ENCODE measurements at regions of chr12 and their contacts with region 1.

Region 1: DNA sequence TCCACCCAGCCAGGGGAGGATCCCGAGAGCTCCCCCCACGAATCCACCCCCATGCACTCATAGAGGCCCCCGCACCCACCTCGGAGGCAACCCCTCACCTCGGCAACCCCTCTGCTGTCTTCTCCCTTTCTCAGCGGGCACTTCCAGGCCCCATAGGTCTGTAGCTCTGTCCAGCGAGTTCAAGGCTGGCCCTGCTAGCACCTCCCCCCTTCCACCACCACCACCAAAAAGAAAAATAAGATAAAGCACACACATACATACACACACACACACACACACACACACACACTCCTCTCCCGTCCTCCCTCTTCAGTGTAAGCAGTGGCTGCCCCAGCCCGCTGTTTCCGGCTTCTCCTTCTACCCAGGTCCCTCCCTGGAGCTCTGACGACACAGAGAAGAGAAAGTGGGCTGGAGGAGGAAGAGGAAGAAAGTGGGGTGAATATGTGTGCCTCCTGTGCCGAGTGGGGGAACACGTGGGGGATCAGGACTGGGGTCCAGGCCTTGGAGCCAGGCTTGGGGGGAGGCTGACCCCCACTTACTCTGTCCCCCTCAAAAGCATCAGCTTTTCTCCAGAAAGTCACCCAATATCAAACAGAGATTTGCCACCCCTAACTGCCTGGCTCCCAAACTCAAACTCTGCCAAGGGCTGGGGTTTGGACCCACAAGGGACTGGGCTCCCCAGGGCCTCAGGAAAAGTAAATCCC is at the start of gene STAT6:
- DNase-seq: peak; percentile 89
- H3K4me3 Mint-ChIP-seq: peak within 1 kb of the TSS; percentile 90
- H3K27ac Mint-ChIP-seq: peak within 1 kb of the TSS; percentile 95
- H3K4me1 Mint-ChIP-seq: peaks cover 49% of the 10 kb centered on the region
- H3K27me3 Mint-ChIP-seq: no peaks in the 10 kb centered on the region
- total RNA-seq, gene STAT6: 209 to 218 TPM

Region 2: DNA sequence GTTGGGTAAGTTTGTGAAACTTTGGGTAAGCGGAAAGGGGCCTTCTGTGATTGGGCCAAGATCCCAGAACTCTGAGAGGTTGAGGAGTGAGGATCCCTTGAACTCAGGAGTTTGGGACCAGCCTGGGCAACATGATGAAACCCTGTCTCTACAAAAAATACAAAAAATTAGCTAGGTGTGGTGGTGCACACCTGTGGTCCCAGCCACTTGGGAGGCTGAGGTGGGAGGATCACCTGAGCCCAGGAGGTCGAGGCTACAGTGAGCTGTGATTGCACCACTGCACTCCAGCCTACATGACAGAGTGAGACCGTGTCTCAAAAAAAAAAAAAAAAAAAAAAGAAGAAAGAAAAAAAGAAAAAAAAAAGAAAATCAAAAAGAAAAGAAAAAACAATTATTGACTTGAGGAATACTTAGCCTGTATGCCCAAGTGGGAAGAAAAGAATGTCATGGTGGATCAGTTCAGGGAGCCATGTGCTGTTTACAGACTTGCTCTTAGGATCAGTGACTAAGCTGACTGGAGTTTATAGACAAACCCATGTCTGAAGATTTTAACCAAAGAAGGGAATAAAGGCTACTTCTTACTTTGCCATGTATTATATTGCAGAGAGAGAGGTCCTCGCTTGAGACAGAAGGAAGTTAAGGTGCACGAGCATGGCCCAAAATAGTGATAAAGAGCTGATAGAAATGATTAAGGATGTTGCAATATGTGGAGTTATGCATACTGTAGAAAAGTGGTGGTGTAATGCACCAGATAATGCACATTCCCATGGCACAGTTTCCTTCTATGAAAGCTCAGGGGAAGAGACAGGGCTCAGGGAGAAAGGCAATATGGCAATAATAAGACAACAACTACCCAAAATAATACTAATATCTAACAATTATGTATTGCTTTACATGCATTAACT is 347.2 kb before region 1 on chr12:
- CTCF ChIA-PET with region 1: interaction called, 19 read pairs
- POLR2A ChIA-PET with region 1: no interaction called
- intact Hi-C with region 1: no loop called
- DNase-seq: no peak
- H3K4me3 Mint-ChIP-seq: no peak overlapping the region
- H3K27ac Mint-ChIP-seq: no peak overlapping the region
- H3K4me1 Mint-ChIP-seq: peaks cover under 1% of the 10 kb centered on the region
- H3K27me3 Mint-ChIP-seq: no peaks in the 10 kb centered on the region

Region 3: GRCh38 chr12:56998981-56999380 is 112.2 kb before region 1 on chr12:
- CTCF ChIA-PET with region 1: interaction called, 34 read pairs
- POLR2A ChIA-PET with region 1: interaction called, 11 read pairs
- intact Hi-C with region 1: loop called (anchors 2 kb)
- DNase-seq: peak; percentile 78
- H3K4me3 Mint-ChIP-seq: no peak overlapping the region
- H3K27ac Mint-ChIP-seq: peak overlapping the region; percentile 34
- H3K4me1 Mint-ChIP-seq: peaks cover 54% of the 10 kb centered on the region
- H3K27me3 Mint-ChIP-seq: no peaks in the 10 kb centered on the region

Region 4: DNA sequence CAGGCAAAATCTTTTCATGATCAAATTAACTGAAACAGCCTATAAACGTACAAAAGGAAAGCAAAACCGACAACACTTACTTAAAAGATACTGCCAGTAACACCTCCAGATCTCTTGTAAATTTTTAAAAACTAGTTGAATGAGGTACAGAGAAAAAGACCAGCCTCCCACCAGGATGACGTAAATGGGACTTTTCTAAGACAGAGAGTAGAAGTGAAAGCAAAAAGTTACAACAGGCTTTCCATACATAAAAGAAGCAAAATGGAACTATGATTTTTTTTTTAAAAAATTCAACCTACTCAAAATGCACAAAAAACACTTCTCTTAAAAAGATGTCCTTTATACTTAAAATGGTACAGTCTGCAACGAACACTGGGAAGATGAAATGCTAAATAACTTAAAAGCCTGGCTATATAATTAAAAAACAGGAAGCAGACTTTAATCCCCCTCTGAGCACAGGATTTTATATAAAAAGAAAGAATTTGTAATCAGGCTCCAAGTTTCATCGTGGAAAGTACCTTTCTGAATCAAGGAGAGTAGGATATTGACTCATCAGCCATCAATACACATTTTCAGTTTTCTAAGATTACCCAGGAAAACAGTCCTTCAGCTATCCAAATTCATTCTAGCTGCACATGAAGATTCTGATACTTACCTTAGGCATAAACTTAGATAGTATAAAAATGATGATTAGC is 47.0 kb before region 1 on chr12:
- CTCF ChIA-PET with region 1: interaction called, 261 read pairs
- POLR2A ChIA-PET with region 1: interaction called, 20 read pairs
- intact Hi-C with region 1: loop called (anchors 1 kb)
- DNase-seq: peak; percentile 58
- H3K4me3 Mint-ChIP-seq: peak overlapping the region; percentile 67
- H3K27ac Mint-ChIP-seq: peak overlapping the region; percentile 98
- H3K4me1 Mint-ChIP-seq: peaks cover 53% of the 10 kb centered on the region
- H3K27me3 Mint-ChIP-seq: no peaks in the 10 kb centered on the region

Region 5: DNA sequence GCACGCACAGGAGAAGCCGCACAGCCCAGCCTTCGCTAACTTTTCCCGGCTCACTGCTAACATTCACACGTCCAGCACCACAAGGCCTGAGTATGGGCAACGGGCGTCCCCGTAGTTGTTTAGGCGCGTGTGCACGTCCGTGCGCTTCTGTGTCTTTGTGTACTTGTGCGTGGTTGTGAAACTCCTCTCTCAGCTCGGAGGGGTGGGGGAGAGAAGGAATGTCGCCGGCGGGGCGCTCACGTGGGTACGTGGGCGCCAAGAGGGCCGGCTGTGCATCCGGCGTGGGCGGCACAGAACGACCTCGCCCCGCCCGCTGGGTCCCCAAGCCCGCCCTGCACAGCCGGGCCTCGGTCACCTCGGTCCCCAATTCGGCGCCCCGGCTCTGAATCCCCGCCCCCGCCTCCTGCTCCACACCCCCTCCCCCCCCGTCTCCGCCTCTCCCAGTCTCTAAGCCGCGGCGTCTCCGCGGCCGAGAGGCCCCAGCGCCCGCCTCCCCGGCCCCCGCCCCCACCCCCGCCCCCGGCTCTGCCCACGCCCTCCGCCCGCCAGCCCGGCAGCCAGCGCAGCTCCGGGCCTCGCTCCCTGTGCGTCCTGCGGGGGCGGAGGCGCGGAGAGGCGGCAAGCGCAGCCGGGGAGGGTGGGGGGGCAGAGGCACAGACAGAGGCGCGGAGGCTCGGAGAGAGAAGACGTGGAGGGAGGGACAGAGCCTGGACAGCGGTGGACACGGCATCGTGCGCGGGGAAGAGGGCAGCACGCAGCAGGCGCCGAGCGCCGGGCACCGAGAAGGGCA is 22.5 kb before region 1 on chr12 and contains the start of gene NAB2:
- CTCF ChIA-PET with region 1: interaction called, 62 read pairs
- POLR2A ChIA-PET with region 1: interaction called, 83 read pairs
- intact Hi-C with region 1: loop called (anchors 1 kb)
- DNase-seq: peak; percentile 92
- H3K4me3 Mint-ChIP-seq: peak within 1 kb of the TSS; percentile 91
- H3K27ac Mint-ChIP-seq: peak within 1 kb of the TSS; percentile 95
- H3K4me1 Mint-ChIP-seq: peaks cover 61% of the 10 kb centered on the region
- H3K27me3 Mint-ChIP-seq: no peaks in the 10 kb centered on the region
- total RNA-seq, gene NAB2: 39.6 to 41.6 TPM

Region 6: DNA sequence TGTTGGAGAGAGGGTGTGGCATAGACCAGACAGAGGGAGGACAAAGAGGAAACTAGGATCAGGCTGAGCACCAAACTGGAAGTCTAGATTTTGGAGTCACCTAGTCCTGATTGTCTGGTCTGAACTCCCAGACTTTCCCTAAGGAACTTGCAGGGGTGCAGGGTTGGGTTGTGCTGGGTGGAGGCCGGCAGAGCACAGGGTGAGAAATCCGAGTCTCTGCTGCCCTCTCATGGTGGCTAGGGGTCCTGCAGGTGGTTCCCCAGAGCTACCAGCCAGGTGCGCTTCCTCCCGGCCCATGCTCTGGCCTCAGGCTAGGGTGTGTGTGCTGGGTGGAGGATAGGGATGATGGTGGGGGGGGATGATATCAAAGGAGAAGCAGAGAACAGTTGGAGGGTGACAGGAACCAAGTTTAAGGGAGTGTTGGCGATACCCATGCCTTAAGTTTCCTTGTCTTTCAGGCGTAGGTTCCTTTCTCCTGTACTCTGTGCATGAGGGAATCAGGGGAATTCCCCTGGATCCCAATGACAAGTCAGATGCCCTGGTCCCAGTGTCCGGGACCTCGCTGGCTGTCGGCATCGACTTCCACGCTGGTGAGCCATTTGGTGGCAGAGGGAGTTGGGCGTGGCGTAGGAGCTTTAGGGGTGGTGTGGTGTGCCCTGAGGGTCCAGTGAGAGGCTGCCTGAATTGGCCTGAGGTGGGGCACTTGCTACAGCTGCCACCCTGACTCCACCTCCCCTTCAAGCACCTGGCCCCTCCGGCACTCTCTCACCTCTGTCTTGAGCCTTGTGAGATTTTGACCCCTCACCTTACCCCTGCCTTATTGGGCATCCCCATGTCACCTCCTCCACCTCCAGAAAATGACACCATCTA is 72.0 kb after region 1 on chr12:
- CTCF ChIA-PET with region 1: interaction called, 34 read pairs
- POLR2A ChIA-PET with region 1: no interaction called
- intact Hi-C with region 1: no loop called
- DNase-seq: peak; percentile 87
- H3K4me3 Mint-ChIP-seq: no peak overlapping the region
- H3K27ac Mint-ChIP-seq: no peak overlapping the region
- H3K4me1 Mint-ChIP-seq: no peaks in the 10 kb centered on the region
- H3K27me3 Mint-ChIP-seq: no peaks in the 10 kb centered on the region

Region 7: DNA sequence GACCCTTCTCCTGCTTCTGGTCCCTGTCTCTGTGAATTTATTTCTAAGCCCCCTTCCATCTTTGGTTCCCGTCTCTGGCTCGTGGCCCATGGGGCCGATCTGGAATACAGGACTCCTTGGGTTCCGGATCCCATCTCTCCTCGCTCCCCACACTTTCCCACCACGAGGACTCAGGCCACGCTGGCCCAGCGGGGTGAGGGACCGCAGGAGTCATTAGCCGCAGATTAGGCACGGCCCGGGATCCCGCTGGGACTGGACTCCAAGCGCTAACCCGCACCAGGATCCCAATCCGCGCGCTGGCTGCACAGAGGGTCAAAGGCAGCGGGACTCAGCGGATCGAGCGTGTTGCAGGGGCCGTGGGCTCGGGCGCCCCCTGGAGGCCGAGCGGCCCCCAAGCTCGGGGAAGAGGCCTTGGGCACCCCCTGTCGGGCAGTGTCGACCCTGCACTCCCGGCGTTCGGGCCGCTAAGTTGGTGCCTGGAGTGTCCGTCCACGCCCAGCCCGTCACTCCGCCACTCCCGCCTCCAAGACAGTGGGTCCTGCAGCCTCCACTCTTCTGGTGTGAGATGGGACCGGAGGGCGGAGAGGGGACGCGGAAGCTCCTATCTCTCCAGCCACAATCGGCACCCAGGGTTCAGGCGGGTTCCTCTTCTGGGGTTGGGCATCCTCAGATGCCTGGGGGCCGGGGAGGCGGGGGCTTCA is 127.8 kb after region 1 on chr12:
- CTCF ChIA-PET with region 1: interaction called, 9 read pairs
- POLR2A ChIA-PET with region 1: interaction called, 9 read pairs
- intact Hi-C with region 1: loop called (anchors 5 kb)
- DNase-seq: peak; percentile 93
- H3K4me3 Mint-ChIP-seq: peak overlapping the region; percentile 82
- H3K27ac Mint-ChIP-seq: no peak overlapping the region
- H3K4me1 Mint-ChIP-seq: peaks cover 60% of the 10 kb centered on the region
- H3K27me3 Mint-ChIP-seq: peaks cover 39% of the 10 kb centered on the region

Region 8: DNA sequence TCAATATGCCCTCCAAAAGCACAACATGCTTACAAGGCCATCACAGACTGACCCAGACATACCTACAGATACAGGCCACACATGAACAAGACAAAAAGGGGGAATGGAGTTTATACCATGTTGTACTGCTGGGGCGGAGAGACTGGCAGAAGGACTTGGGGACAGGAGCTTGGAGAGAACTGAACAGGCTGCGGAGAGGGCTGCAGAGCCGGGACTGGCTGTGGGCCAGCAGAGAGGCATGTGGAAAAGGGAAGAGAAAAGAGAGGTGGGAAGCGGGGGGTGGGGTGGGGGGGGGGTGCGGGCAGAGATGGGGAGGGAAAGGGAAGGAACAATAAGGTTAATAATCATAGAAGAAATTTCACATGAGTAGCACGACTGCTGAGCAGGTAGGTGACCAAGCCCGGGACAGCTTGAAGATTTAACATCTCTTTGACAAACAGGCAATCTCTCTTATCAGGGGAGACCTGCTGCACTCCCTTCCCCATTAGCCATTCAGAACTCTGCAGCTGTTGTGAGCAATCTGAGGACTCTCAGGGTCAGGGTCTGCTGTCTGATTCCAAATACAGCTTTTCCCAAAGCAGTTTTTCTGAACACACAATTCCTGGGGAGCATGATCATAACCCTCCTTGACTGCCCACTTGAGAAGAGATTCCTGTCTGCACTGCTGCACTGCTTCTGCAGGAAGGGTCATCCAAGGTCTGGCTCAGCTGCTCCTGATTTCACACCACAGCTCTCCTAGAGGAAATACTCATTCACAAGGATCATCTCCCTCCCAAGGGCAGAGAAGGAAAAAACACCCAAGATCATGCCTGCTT is 161.4 kb after region 1 on chr12:
- CTCF ChIA-PET with region 1: no interaction called
- POLR2A ChIA-PET with region 1: no interaction called
- intact Hi-C with region 1: no loop called
- DNase-seq: no peak
- H3K4me3 Mint-ChIP-seq: no peak overlapping the region
- H3K27ac Mint-ChIP-seq: no peak overlapping the region
- H3K4me1 Mint-ChIP-seq: peaks cover 16% of the 10 kb centered on the region
- H3K27me3 Mint-ChIP-seq: no peaks in the 10 kb centered on the region

Measured in activated CD4-positive, alpha-beta memory T cell treated with anti-CD3 and anti-CD28 coated beads for 36 hours (primary cell).